ENCODE measurements at regions of chr17 and their contacts with region 1.

Region 1: GRCh38 chr17:48335858-48336500 is 94.0 kb downstream of the SKAP1 start:
- DNase-seq: peak; percentile 42
- ATAC-seq: no peak
- H3K4me3 ChIP-seq: no peak overlapping the region
- H3K27ac ChIP-seq: no peak overlapping the region
- H3K4me1 ChIP-seq: no peaks in the 10 kb centered on the region
- H3K27me3 ChIP-seq: no peaks in the 10 kb centered on the region; a peak in 2 of 5 replicates
- CTCF ChIP-seq: peak; percentile 67
- EP300 ChIP-seq: no peak
- POLR2A ChIP-seq: no peak
- RAD21 ChIP-seq: peak; percentile 26; the same call in 1 of the 2 replicates

Region 2: GRCh38 chr17:48593840-48594537 is 258.0 kb after region 1 on chr17:
- CTCF ChIA-PET with region 1: interaction called, 7 read pairs
- POLR2A ChIA-PET with region 1: no interaction called
- in situ Hi-C with region 1: no loop called
- intact Hi-C with region 1: loop called (anchors 1 kb)
- DNase-seq: peak; percentile 31
- ATAC-seq: peak; percentile 81
- H3K4me3 ChIP-seq: peak overlapping the region in 1 of 3 experiments; percentile 9; a peak in 1 of 6 replicates
- H3K27ac ChIP-seq: no peak overlapping the region
- H3K4me1 ChIP-seq: 0 out of 2 replicates have a peak, but pooled peaks cover 6% of the 10 kb centered on the region
- H3K27me3 ChIP-seq: peaks cover 50 to 91% of the 10 kb centered on the region in 2 experiments
- CTCF ChIP-seq: peak; percentile 92
- EP300 ChIP-seq: no peak
- POLR2A ChIP-seq: no peak
- RAD21 ChIP-seq: peak; percentile 82

Measured in HepG2 (cell line).